ENCODE measurements at regions of chr2 and their contacts with region 1.

Region 1: DNA sequence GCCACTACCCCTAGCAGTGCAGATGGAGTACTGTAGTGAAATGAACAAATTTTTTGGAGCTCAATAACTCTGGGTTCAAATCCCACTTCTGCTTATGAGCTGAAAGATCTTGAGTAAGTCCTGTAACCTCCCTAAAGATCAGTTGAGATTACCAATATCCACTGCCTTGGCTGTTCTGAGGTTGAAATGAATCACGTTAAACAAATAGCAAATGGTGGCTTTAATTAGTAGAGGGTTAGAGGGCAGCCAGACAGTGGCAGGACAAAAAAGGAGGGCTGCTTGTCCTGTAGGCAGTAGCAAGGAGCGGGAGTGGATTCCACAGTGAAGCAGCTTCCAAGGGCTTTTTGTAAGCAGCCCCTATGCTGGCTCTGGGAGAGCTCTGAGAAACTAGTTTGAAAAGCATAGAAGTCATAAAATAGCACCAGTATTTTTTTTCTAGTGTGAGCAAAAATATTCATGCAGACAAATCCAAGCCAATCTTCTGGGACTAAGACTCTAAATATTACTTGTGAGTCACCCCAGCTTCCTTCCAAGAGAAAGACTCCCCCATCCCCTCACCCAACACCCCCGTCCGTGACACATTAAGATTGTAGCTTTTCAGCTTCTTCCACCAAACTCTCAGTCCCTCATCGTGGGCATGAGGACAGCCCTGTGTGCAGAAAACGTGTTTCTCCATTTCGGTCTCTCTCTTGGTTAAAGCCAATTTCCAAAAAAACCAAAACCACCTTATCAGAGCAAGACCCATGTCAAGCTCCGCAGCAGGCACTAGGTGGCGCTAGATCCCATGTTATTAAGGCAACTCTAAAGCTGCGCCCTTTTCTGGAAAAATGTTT is 123.5 kb upstream of the LGALSL start:
- DNase-seq: peak; percentile 78 to 91 (median 85)
- ATAC-seq: peak; percentile 62 to 70
- H3K4me3 ChIP-seq: peak overlapping the region; percentile 33
- H3K27ac ChIP-seq: peak overlapping the region; percentile 88
- H3K4me1 ChIP-seq: peaks cover 3% of the 10 kb centered on the region
- H3K27me3 ChIP-seq: no peaks in the 10 kb centered on the region

Region 2: DNA sequence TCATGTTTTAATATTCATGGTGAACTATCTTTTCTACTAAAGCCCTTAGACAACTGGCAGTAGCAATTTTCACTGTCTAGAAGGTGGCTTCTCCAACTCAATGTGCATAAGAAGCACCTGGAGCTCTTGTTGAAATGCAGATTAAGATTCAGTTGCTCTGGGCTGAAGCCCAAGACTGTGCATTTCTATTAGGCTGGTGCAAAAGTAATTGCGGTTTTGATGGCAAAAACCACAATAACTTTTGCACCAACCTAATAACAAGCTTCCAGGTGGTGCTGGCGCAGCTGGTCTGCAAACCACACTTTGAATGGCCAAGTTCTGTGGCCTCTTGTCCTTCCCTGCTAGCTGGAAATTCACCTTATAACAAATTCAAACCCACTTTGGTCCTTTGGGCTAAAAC is 284.6 kb before region 1 on chr2:
- intact Hi-C with region 1: loop called (anchors 2 to 5 kb)
- DNase-seq: no peak
- ATAC-seq: no peak
- H3K4me3 ChIP-seq: no peak overlapping the region
- H3K27ac ChIP-seq: no peak overlapping the region
- H3K4me1 ChIP-seq: no peaks in the 10 kb centered on the region
- H3K27me3 ChIP-seq: no peaks in the 10 kb centered on the region

Region 3: DNA sequence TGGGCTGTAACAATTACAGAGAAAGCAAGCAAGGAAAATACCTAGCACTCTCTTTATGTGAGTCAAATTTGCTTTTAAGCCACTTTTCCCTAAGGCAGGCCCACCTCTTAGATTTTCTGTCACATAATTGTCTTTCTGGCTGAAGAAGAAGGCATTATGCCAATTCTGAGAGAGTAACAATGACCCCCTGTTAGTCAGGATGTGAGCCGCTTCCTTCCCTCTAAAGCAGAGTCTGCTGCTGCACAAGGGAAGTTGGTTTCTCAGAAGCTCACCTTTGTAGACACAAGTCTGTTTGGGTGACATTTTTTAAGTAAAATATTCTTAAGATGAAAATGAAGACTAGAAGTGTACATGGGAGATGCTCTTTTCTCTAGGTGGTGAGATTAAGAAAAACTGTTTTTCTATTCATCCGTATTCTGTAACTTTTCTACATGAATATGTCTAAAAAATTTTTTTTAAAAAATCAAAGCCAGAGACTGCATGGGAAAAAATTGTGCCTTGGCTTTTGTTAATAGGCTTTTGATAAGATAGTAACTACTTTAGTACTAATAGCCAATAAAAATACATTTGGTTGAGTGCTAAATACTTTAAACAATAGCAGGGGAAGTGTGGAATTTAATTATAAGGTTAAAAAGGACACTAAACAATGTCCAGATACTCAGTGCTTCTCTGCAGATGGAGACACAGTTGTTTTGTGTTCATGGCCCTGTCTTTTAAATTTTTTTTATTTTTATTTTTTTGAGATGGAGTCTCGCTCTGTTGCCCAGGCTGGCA is 277.8 kb before region 1 on chr2:
- intact Hi-C with region 1: loop called (anchors 2 to 5 kb)
- DNase-seq: no peak
- ATAC-seq: peak; percentile 71 to 92
- H3K4me3 ChIP-seq: no peak overlapping the region
- H3K27ac ChIP-seq: no peak overlapping the region
- H3K4me1 ChIP-seq: no peaks in the 10 kb centered on the region
- H3K27me3 ChIP-seq: no peaks in the 10 kb centered on the region

Region 4: GRCh38 chr2:64192125-64192479 is 138.4 kb before region 1 on chr2:
- intact Hi-C with region 1: no loop called
- DNase-seq: no peak
- ATAC-seq: peak; percentile 37 to 51
- H3K4me3 ChIP-seq: no peak overlapping the region
- H3K27ac ChIP-seq: no peak overlapping the region
- H3K4me1 ChIP-seq: no peaks in the 10 kb centered on the region
- H3K27me3 ChIP-seq: no peaks in the 10 kb centered on the region

Region 5: DNA sequence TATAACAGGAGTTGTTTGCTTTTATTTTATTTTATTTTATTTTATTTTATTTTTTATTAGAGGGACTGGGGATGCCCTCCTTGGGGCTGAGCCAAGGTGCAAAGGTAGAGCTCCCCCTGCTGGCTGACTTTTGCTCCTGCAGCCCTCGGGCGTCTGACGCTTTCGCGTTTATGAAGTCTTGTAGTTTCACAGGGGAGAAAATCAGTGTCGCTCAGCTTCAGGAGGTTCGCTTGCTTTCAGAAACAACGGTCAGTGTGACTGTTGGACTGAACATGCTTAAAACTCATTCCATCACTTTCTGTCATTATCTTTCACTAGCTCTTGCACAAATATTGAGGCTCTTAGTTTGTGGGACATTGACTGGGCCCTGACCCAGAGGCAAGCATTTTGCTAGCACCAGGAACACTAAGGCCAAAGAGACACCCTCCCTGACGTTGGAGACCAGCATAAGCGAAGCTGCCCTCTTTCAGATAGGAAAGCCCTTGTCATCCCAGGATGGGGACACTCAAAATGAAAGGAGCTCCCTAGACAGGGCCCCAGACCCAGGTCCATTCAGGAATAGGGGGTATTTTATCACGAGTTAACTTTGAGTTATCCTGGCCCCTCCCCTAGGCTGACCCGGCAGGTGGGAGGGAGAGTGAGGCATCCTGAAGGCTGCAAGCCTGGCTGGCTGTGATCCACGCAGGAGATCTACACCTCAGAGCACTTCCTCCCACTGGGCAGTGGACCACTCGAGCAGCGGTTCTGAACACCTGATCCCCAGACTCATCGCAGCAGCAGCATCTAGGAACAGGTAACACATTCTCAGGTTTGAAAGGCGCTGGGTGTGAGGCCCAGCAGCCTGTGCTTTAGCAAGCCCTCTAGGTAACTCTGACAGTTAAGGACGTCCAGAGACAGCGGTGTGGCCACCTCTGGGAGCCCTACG is 157.8 kb after region 1 on chr2:
- intact Hi-C with region 1: loop called (anchors 1 to 5 kb)
- DNase-seq: peak; percentile 51 to 86 (median 84)
- ATAC-seq: peak; percentile 38 to 71
- H3K4me3 ChIP-seq: no peak overlapping the region
- H3K27ac ChIP-seq: no peak overlapping the region
- H3K4me1 ChIP-seq: no peaks in the 10 kb centered on the region
- H3K27me3 ChIP-seq: no peaks in the 10 kb centered on the region

Region 6: GRCh38 chr2:64562148-64562784 is 231.8 kb after region 1 on chr2:
- intact Hi-C with region 1: loop called (anchors 5 to 10 kb)
- DNase-seq: no peak
- ATAC-seq: peak in 1 of 2 donors; percentile 29
- H3K4me3 ChIP-seq: no peak overlapping the region
- H3K27ac ChIP-seq: no peak overlapping the region
- H3K4me1 ChIP-seq: no peaks in the 10 kb centered on the region
- H3K27me3 ChIP-seq: no peaks in the 10 kb centered on the region

Region 7: DNA sequence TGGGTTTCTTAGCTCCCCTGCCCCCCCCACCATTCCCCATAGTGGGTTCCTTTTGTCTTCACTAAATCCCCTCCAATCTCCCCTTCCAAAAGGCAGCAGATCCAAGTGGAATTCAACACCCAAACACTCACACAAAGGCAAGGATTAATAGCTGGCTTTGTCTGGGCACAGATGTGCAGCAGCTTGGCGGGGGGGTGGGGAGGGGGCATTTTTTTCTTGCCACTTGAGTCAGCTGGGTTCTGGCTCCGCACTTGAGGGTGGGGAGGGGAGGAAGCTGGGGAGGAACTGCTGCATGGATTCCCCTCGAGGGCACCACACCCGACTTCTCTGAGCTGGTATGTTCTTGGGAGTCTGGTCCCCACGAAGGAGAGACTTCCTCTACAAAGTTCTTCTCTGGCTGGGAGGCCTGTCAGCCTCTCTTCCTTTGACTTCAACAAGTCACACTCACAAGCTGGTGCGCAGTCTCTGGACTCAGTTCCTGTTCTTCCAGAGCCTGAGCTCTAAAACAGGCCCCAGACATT is 287.2 kb after region 1 on chr2:
- intact Hi-C with region 1: no loop called
- DNase-seq: peak in 2 of 3 donors; percentile 11 to 36
- ATAC-seq: no peak
- H3K4me3 ChIP-seq: no peak overlapping the region
- H3K27ac ChIP-seq: no peak overlapping the region
- H3K4me1 ChIP-seq: no peaks in the 10 kb centered on the region
- H3K27me3 ChIP-seq: no peaks in the 10 kb centered on the region

Region 8: GRCh38 chr2:64873472-64873924 is 543.0 kb after region 1 on chr2:
- intact Hi-C with region 1: loop called in 2 of 4 experiments (anchors 10 kb)
- DNase-seq: peak; percentile 72 to 92 (median 91)
- ATAC-seq: peak; percentile 70 to 75
- H3K4me3 ChIP-seq: no peak overlapping the region
- H3K27ac ChIP-seq: no peak overlapping the region
- H3K4me1 ChIP-seq: no peaks in the 10 kb centered on the region
- H3K27me3 ChIP-seq: no peaks in the 10 kb centered on the region

Measured in right cardiac atrium (tissue), 5 donors.